OCI-LY7 (cell line): ENCODE measurements at regions of chr5 and their contacts with region 1.

Region 1: DNA sequence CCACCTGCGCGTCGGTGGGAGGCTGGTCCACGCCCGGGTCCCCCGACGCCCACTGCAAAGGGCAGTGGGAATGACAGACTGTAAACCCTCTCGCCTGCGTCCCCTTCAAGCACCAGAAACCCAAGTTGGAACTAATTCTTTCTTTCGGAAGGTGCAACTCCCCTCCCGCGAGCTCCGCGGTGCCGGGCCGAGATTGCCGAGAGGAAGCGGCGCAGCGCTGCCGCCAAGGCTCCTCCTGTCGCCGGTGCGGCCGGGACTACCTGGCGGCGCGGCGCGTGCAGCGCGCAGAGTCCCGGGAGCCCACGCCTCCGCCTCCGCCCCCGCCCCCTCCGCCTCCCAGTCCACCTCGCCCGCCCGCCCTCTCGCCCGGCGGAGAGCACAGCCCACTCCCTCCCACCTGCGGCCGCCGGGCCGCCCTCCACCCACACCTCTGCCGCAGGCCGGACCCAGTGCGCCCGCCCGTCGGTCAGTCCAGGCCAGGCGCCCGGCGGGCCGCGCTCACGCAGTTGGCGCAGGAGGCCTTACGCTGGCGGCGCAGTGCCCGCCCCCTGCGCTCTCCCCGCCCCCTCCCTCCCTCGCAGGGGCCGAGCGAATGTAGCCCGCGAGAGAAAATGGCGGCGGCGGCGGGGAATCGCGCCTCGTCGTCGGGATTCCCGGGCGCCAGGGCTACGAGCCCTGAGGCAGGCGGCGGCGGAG is at the start of gene MAP3K1:
- DNase-seq: peak; percentile 88
- H3K4me3 ChIP-seq: peak within 1 kb of the TSS; percentile 95
- H3K27ac ChIP-seq: peak within 1 kb of the TSS; percentile 74
- H3K4me1 ChIP-seq: peaks cover 52% of the 10 kb centered on the region
- CTCF ChIP-seq: peak; percentile 64
- total RNA-seq, gene MAP3K1: 25.9 and 29.9 TPM in 2 replicates

Region 2: GRCh38 chr5:56481428-56482357 is 333.4 kb before region 1 on chr5:
- CTCF ChIA-PET with region 1: no interaction called
- POLR2A ChIA-PET with region 1: no interaction called
- intact Hi-C with region 1: loop called (anchors 1 kb)
- DNase-seq: peak; percentile 56
- H3K4me3 ChIP-seq: peak overlapping the region; percentile 65
- H3K27ac ChIP-seq: peak overlapping the region; percentile 60
- H3K4me1 ChIP-seq: peaks cover 40% of the 10 kb centered on the region
- CTCF ChIP-seq: peak; percentile 81

Region 3: DNA sequence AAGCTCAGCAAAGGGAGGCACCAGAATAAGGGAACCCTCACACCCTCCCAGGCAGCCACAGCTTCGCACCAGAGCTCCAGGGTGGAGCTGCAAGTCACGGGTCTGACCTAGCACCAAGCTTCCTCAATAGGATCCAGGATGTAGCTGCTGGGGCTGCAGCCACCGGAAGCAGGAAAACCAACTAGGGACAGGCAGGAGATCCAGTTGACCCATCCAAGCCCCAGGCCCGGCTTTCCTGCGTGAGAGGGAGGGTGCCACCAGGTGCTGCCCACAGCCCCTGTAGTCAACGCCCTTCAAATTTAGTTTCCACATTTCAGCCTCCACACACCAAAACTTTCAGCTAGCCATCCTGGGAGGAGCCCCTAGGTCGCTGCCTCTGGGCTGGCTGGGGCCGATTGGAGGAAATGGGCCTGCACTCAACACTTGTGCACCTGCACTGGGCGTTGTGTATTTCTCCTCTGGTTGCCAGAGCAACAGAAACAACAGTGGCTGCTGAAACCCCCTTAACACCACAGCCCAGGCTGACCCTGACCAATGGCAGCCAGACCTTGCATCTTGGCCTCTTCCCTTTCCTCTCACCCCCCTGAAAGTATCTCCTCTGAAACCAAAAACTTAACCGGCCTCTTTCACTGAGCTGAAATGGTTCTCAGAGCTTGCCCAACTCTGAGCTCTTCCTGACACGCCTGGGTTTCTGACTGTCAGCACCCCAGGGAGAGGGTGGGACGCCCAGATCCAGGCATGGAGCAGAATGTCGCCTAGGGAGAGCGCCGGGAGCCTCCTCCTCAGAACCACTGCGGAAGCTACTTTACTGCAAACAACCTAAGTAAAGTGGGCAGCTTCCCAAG is 226.3 kb before region 1 on chr5:
- CTCF ChIA-PET with region 1: no interaction called
- POLR2A ChIA-PET with region 1: interaction called, 4 read pairs
- intact Hi-C with region 1: loop called (anchors 5 kb)
- DNase-seq: peak; percentile 93
- H3K4me3 ChIP-seq: peak overlapping the region; percentile 6
- H3K27ac ChIP-seq: peak overlapping the region; percentile 36
- H3K4me1 ChIP-seq: peaks cover 32% of the 10 kb centered on the region
- CTCF ChIP-seq: no peak

Region 4: DNA sequence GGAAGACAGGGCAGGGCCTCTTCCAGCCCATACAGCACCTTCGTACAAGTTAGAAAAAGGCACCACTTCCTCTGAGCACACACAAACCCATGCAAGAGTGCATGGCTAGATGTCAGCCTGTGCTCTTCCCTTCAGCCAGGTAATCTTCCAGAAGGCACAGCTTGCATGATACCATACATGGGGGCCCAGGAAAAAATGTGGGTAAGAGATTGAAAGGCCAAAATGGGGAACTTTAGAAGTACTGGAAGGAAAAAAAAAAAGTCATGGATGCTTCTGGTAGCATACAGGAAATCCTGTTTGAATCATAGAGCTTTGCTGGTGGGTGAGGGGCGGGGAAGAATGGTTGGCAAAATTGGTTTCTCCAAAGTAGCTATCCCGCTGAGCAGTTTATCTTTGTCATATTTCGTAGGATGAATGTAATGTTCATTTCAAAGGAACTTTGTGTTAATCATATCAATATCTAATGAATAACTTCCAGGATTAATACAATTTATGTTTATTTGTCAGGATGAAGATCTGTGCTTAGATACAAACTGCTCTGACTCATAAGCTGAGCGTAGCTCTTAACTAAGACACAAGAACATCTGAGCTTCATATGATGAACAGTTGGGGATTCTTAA is 78.0 kb before region 1 on chr5:
- CTCF ChIA-PET with region 1: no interaction called
- POLR2A ChIA-PET with region 1: interaction called, 4 read pairs
- intact Hi-C with region 1: loop called (anchors 2 kb)
- DNase-seq: peak; percentile 46
- H3K4me3 ChIP-seq: peak overlapping the region; percentile 31
- H3K27ac ChIP-seq: peak overlapping the region; percentile 86
- H3K4me1 ChIP-seq: peaks cover 57% of the 10 kb centered on the region
- CTCF ChIP-seq: no peak